ENCODE measurements at regions of chr14 and their contacts with region 1.

Region 1: DNA sequence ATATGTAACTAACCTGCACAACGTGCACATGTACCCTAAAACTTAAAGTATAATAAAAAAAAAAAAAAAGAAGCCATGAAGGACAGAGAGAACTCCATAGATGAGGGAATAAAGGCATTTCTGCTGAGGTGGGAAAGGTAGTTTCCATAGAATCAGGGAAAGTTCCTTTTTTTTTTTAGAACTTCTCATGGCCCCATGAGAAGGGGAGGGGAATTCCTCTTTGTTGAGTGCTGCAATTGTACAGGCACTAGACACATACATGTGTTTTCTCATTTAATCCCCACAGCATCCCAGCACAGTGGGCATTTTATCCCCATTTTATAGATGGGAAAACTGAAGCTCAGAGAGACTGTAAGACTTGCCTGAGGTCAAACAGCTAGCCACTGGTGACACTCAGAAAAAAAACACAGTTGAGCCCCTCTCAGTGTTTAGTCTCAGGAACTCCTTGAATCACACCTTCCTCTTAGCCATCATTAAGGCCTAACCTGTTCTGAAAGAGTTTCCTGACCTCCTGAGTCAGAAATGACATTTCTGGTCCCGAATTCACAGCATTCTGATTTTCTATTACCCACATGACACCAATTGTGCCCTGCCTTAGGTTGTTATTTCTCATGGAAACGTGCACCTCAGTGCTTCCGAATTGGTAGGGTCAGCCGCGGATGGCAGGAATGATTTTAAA is 189.3 kb upstream of the G2E3 start:
- DNase-seq: no peak
- ATAC-seq: no peak
- H3K4me3 ChIP-seq: no peak overlapping the region
- H3K27ac ChIP-seq: no peak overlapping the region
- H3K4me1 ChIP-seq: no peaks in the 10 kb centered on the region
- H3K27me3 ChIP-seq: no peaks in the 10 kb centered on the region
- CTCF ChIP-seq: no peak

Region 2: DNA sequence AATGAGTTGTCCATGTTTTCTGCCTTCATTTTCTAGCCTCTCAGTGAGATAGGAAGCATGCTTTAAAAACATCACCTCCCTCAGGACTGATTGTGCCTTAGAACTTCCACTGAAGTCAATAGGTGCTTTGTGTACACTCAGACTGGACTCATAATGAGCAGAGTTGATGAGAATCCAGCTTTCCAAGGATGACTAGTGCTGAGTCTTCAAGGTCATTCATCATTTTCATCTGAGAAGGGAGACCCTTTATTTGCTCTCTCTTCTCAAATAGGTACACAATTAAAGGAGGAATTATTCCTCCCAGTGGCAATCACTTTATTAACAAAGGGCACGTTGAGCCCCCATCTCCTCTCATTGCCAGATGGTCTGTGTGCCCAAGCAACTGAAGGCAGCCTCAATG is 231.1 kb before region 1 on chr14:
- intact Hi-C with region 1: no loop called
- DNase-seq: no peak
- ATAC-seq: no peak
- H3K4me3 ChIP-seq: no peak overlapping the region
- H3K27ac ChIP-seq: no peak overlapping the region
- H3K4me1 ChIP-seq: no peaks in the 10 kb centered on the region
- H3K27me3 ChIP-seq: no peaks in the 10 kb centered on the region
- CTCF ChIP-seq: no peak

Region 3: GRCh38 chr14:30597504-30597903 is 227.9 kb after region 1 on chr14:
- intact Hi-C with region 1: no loop called
- DNase-seq: no peak
- ATAC-seq: no peak
- H3K4me3 ChIP-seq: no peak overlapping the region
- H3K27ac ChIP-seq: no peak overlapping the region
- H3K4me1 ChIP-seq: peaks cover 15% of the 10 kb centered on the region
- H3K27me3 ChIP-seq: no peaks in the 10 kb centered on the region
- CTCF ChIP-seq: no peak

Region 4: DNA sequence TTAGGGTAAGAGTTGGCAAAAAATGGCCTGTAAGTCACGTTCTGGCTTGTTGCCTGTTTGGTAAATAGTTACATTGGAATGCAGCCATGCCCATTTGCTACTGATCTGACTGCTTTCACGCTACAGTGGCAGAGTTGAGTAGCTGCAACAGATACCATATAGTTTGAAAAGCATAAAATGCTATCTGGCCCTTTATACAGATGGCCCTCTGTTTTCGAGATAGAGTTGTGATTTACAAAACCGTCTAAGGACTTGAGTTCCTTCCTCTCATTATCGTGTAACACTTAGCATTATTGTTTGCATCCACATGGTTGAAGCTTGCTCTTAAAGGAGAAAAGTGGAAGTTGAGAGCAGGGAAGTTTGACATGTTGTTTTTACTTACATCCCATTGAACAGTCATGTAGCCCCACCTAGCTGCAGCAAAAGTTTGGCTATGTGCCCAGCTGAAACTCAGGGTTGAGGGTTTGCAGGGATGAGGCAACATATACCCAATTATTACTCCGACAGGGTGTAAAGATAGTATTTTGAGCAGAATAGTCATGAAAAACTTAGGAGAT is 241.2 kb after region 1 on chr14:
- intact Hi-C with region 1: loop called (anchors 2 to 5 kb)
- DNase-seq: peak in 1 of 2 donors; percentile 62
- ATAC-seq: peak in 3 of 4 donors; percentile 51 to 58 (median 53)
- H3K4me3 ChIP-seq: no peak overlapping the region
- H3K27ac ChIP-seq: no peak overlapping the region
- H3K4me1 ChIP-seq: peaks cover 22% of the 10 kb centered on the region
- H3K27me3 ChIP-seq: no peaks in the 10 kb centered on the region
- CTCF ChIP-seq: peak; percentile 54